Caco-2 (cell line): ENCODE measurements at regions of chr11 and their contacts with region 1.

Region 1: GRCh38 chr11:23836981-23837380 is 659.9 kb upstream of the LUZP2 start:
- DNase-seq: no peak
- H3K4me3 ChIP-seq: no peak overlapping the region
- H3K4me3 Mint-ChIP-seq: no peak overlapping the region
- H3K27ac Mint-ChIP-seq: no peak overlapping the region
- H3K4me1 ChIP-seq: no peaks in the 10 kb centered on the region
- H3K4me1 Mint-ChIP-seq: peaks cover 10% of the 10 kb centered on the region
- H3K27me3 ChIP-seq: no peaks in the 10 kb centered on the region
- H3K27me3 Mint-ChIP-seq: no peaks in the 10 kb centered on the region
- CTCF ChIP-seq: no peak

Region 2: GRCh38 chr11:23797624-23798419 is 39.2 kb before region 1 on chr11:
- CTCF ChIA-PET with region 1: no interaction called
- POLR2A ChIA-PET with region 1: no interaction called
- intact Hi-C with region 1: no loop called
- DNase-seq: no peak
- H3K4me3 ChIP-seq: no peak overlapping the region
- H3K4me3 Mint-ChIP-seq: no peak overlapping the region
- H3K27ac Mint-ChIP-seq: no peak overlapping the region
- H3K4me1 ChIP-seq: no peaks in the 10 kb centered on the region
- H3K4me1 Mint-ChIP-seq: no peaks in the 10 kb centered on the region
- H3K27me3 ChIP-seq: no peaks in the 10 kb centered on the region
- H3K27me3 Mint-ChIP-seq: peaks cover 3% of the 10 kb centered on the region
- CTCF ChIP-seq: no peak

Region 3: GRCh38 chr11:23856654-23857053 is 19.7 kb after region 1 on chr11:
- CTCF ChIA-PET with region 1: no interaction called
- POLR2A ChIA-PET with region 1: no interaction called
- intact Hi-C with region 1: no loop called
- DNase-seq: no peak
- H3K4me3 ChIP-seq: no peak overlapping the region
- H3K4me3 Mint-ChIP-seq: no peak overlapping the region
- H3K27ac Mint-ChIP-seq: no peak overlapping the region
- H3K4me1 ChIP-seq: no peaks in the 10 kb centered on the region
- H3K4me1 Mint-ChIP-seq: no peaks in the 10 kb centered on the region
- H3K27me3 ChIP-seq: no peaks in the 10 kb centered on the region
- H3K27me3 Mint-ChIP-seq: no peaks in the 10 kb centered on the region
- CTCF ChIP-seq: no peak

Region 4: DNA sequence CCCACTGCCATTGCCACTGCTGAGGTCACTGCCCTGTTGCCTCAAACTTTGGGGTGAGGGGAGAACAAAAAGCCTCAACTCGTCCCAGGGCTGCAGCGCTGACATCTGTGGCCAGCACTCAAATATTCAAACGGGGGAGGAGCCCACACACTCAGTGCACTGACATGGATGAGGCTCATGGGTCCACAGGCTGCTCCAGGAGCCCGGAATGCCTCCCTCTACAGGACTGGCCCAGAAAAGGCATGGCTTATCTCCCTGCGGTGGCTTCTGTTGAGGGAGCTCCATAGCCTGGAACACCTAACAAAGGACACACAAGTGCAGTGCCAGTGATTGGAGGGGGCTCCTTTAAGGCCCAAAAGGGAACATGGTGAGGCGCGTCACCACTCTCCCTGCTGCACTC is 318.8 kb after region 1 on chr11:
- CTCF ChIA-PET with region 1: no interaction called
- POLR2A ChIA-PET with region 1: no interaction called
- intact Hi-C with region 1: loop called (anchors 10 kb)
- DNase-seq: peak; percentile 40 to 42
- H3K4me3 ChIP-seq: no peak overlapping the region
- H3K4me3 Mint-ChIP-seq: no peak overlapping the region
- H3K27ac Mint-ChIP-seq: no peak overlapping the region
- H3K4me1 ChIP-seq: no peaks in the 10 kb centered on the region
- H3K4me1 Mint-ChIP-seq: no peaks in the 10 kb centered on the region
- H3K27me3 ChIP-seq: no peaks in the 10 kb centered on the region
- H3K27me3 Mint-ChIP-seq: no peaks in the 10 kb centered on the region
- CTCF ChIP-seq: no peak

Region 5: DNA sequence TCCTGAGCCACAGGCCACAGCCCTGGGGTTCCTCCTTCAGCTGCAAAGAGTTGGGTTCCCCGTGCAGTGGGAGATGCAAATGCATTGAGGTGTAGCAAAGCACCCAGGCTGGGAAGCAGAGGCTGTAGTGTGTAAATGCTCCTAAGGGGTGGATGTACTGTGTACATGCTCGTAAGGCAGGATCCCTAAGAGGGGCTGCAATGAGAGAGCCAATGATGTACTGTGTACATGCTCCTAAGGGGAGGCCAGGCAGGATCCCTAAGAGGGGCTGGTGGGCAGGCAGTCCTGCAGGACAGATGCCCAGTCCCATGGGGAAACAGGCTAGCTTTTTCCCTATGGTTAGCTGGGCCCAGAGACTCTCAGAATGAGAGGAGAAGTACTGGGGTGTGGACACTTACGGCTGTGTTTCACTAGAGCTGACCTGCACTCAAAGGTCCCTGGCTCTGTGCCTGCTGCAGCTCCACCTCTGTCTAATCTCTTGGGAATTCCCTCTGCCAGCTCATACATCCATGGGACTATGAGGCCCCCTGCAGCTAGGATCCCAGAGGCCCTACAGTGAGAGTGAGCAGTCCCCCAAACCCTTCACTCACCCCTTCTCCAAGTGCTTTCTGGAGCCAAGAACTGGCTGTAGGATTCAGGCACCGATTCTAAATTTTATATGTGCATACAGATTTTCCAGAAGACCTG is 398.0 kb after region 1 on chr11:
- CTCF ChIA-PET with region 1: no interaction called
- POLR2A ChIA-PET with region 1: no interaction called
- intact Hi-C with region 1: loop called (anchors 1 kb)
- DNase-seq: peak; percentile 36 to 52
- H3K4me3 ChIP-seq: no peak overlapping the region
- H3K4me3 Mint-ChIP-seq: no peak overlapping the region
- H3K27ac Mint-ChIP-seq: no peak overlapping the region
- H3K4me1 ChIP-seq: no peaks in the 10 kb centered on the region
- H3K4me1 Mint-ChIP-seq: peaks cover under 1% of the 10 kb centered on the region
- H3K27me3 ChIP-seq: no peaks in the 10 kb centered on the region
- H3K27me3 Mint-ChIP-seq: no peaks in the 10 kb centered on the region
- CTCF ChIP-seq: peak in 1 of 2 experiments; percentile 34

Region 6: DNA sequence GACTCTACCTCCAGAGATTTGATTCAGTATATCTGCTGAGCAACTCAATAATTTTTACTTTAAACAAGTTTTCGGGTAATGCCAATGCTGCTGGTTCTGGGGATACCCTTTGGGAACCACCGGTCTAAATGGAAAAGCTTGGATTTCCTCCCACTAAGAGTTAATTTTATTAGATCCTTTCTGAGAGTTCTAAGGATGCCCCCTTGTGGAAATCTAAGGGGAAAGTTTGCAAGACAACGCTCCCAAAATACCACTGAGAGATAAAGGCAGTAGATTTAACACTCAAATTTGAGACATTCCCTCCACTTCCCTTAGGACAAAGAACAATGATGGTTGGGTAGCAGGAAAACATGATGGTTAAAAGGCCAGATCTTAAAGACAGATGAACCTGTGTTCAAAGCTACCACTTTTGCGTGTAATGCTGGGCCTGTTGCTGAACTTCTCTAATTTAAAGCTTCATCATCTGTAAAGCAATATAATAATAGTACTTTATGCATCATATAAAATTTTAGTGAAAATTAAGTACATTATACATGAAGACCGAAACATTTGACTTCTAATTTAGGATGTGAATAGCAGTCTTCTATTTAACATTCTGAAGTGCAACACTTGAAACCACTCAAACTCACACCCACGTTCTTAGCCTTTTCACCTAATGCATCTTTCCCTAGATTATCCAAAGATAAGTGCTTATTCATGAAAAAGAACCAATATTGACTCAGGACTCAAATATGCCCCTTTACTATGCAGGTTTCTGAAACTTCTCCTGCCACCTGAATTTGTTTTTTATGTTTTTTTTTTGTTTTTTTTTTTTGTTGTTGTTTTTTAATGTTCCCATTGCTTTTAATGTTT is 549.8 kb after region 1 on chr11:
- CTCF ChIA-PET with region 1: no interaction called
- POLR2A ChIA-PET with region 1: no interaction called
- intact Hi-C with region 1: loop called (anchors 1 kb)
- DNase-seq: peak in 1 of 2 experiments; percentile 17
- H3K4me3 ChIP-seq: no peak overlapping the region
- H3K4me3 Mint-ChIP-seq: no peak overlapping the region
- H3K27ac Mint-ChIP-seq: no peak overlapping the region
- H3K4me1 ChIP-seq: no peaks in the 10 kb centered on the region
- H3K4me1 Mint-ChIP-seq: no peaks in the 10 kb centered on the region
- H3K27me3 ChIP-seq: no peaks in the 10 kb centered on the region
- H3K27me3 Mint-ChIP-seq: peaks cover 2% of the 10 kb centered on the region
- CTCF ChIP-seq: peak; percentile 45 to 55